ENCODE measurements at regions of chr11 and their contacts with region 1.

Region 1: DNA sequence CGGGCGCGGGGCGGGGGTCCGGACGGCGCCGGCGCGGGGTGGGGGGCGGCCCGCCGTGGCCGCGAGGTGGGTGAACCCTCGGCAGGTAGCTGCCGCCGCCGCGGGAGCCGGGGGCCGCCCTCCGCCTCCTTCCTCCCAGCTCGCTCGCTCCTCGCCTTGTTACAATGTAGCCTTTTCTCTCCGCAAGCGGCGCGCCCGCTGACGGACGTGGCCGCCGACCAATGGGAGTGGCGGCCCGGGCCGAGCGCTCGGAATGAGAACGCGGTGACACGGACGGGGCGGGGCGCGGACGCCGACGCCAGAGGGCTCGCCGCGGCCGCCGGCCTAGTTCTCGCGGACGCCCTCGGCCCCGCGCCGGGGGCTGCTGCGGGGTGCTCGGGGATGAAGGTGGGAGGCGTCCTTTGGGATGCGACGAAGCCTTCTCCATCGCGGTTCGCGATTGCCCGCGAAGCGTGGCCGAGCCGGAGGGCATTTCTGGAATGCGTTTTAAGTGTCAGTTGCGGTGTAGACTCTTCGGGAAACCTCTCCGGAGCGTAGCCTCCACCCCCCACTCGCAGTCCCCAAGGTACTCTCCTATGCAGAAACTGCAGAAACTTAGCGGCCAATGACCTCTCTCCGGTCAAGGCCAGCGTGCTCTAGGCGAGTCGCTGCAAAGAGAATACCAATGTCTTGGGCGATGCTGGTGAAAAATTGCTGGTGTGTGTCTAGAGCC is 734 bp downstream of the PRDM11 start:
- DNase-seq: peak; percentile 95
- ATAC-seq: peak; percentile 97
- H3K4me3 ChIP-seq: peak overlapping the region; percentile 60 to 92 (median 72)
- H3K4me3 Mint-ChIP-seq: peak overlapping the region; percentile 92
- H3K27ac ChIP-seq: peak overlapping the region; percentile 63 to 86
- H3K27ac Mint-ChIP-seq: peak overlapping the region; percentile 95
- H3K4me1 ChIP-seq: peaks cover 19 to 27% of the 10 kb centered on the region in 2 donors
- H3K4me1 Mint-ChIP-seq: peaks cover 42% of the 10 kb centered on the region
- H3K27me3 ChIP-seq: peaks cover 0 to 12% (median 8%) of the 10 kb centered on the region in 4 experiments
- H3K27me3 Mint-ChIP-seq: peaks cover 12% of the 10 kb centered on the region
- CTCF ChIP-seq: no peak

Region 2: GRCh38 chr11:44950625-44951476 is 196.3 kb before region 1 on chr11 and contains the start of gene TP53I11:
- CTCF ChIA-PET with region 1: no interaction called
- POLR2A ChIA-PET with region 1: no interaction called
- intact Hi-C with region 1: loop called (anchors 2 kb)
- DNase-seq: peak; percentile 84
- ATAC-seq: peak; percentile 76
- H3K4me3 ChIP-seq: peak within 1 kb of the TSS; percentile 51 to 97 (median 83)
- H3K4me3 Mint-ChIP-seq: peak within 1 kb of the TSS; percentile 89
- H3K27ac ChIP-seq: peak within 1 kb of the TSS; percentile 64 to 85
- H3K27ac Mint-ChIP-seq: peak within 1 kb of the TSS; percentile 78
- H3K4me1 ChIP-seq: peaks cover 13 to 31% of the 10 kb centered on the region in 2 donors
- H3K4me1 Mint-ChIP-seq: peaks cover 61% of the 10 kb centered on the region
- H3K27me3 ChIP-seq: no peaks in the 10 kb centered on the region
- H3K27me3 Mint-ChIP-seq: no peaks in the 10 kb centered on the region
- CTCF ChIP-seq: peak; percentile 80
- total RNA-seq, gene TP53I11: 229 and 240 TPM in 2 replicates

Region 3: GRCh38 chr11:45178890-45179671 is 31.9 kb after region 1 on chr11:
- CTCF ChIA-PET with region 1: no interaction called
- POLR2A ChIA-PET with region 1: no interaction called
- intact Hi-C with region 1: loop called (anchors 2 kb)
- DNase-seq: no peak
- ATAC-seq: no peak
- H3K4me3 ChIP-seq: no peak overlapping the region
- H3K4me3 Mint-ChIP-seq: peak overlapping the region; percentile 90
- H3K27ac ChIP-seq: no peak overlapping the region
- H3K27ac Mint-ChIP-seq: no peak overlapping the region
- H3K4me1 ChIP-seq: peaks cover 8 to 18% of the 10 kb centered on the region in 2 donors
- H3K4me1 Mint-ChIP-seq: peaks cover 24% of the 10 kb centered on the region
- H3K27me3 ChIP-seq: peaks cover 0 to 12% (median 5%) of the 10 kb centered on the region in 4 experiments
- H3K27me3 Mint-ChIP-seq: peaks cover 12% of the 10 kb centered on the region
- CTCF ChIP-seq: no peak

Region 4: GRCh38 chr11:45354976-45355705 is 208.0 kb after region 1 on chr11:
- CTCF ChIA-PET with region 1: no interaction called
- POLR2A ChIA-PET with region 1: no interaction called
- intact Hi-C with region 1: loop called (anchors 1 kb)
- DNase-seq: peak; percentile 94
- ATAC-seq: peak; percentile 96
- H3K4me3 ChIP-seq: peak overlapping the region; percentile 22 to 68 (median 63)
- H3K4me3 Mint-ChIP-seq: peak overlapping the region; percentile 83
- H3K27ac ChIP-seq: peak overlapping the region; percentile 43 to 64
- H3K27ac Mint-ChIP-seq: peak overlapping the region; percentile 90
- H3K4me1 ChIP-seq: peaks cover 13 to 17% of the 10 kb centered on the region in 2 donors
- H3K4me1 Mint-ChIP-seq: peaks cover 15% of the 10 kb centered on the region
- H3K27me3 ChIP-seq: peaks cover 0 to 6% (median 0%) of the 10 kb centered on the region in 4 experiments
- H3K27me3 Mint-ChIP-seq: peaks cover 30% of the 10 kb centered on the region
- CTCF ChIP-seq: no peak

Measured in B cell (primary cell).